ENCODE measurements at regions of chr9 and their contacts with region 1.

Region 1: DNA sequence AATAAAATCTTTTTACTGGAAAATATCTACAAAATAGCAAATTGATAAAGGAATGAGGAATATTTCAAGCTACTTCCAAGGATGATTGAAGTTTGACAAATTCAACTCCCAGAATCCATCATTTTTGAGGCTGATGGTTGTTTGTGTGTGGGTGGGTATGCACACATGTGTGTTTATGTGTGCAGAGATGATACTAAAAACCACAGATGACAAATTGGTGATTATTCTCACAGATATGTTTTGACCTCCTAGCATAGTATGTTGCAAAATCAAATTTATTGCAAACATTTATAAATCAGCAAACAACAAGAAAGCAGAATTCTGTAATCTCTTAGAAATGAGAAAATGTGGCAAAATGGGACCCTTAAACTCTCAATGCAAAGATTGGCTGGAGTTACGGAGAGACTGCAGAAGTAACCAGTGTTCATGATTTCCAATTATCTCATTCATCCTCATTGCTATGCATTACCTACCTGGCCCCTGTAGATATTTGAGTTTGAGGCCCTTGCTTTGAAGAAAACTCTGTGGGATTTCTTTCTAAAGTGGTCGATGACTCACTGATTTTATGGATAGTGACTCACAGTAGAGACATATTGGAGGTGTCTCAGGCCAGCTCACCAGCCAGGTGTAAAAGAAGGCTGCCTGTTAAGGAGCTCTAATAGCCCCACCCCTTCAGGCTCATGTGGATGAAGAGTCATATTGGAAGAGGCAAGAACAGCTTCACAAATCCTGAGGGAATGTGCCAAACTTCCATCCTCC is 44.6 kb upstream of the TMC1 start:
- DNase-seq: peak in 2 of 5 donors; percentile 1 to 60
- H3K4me3 ChIP-seq: no peak overlapping the region
- H3K4me3 Mint-ChIP-seq: peak overlapping the region in 1 of 8 donors; percentile 12
- H3K27ac ChIP-seq: no peak overlapping the region
- H3K27ac Mint-ChIP-seq: no peak overlapping the region
- H3K4me1 ChIP-seq: peaks cover 16% of the 10 kb centered on the region
- H3K4me1 Mint-ChIP-seq: peaks cover 12 to 35% (median 18%) of the 10 kb centered on the region in 4 donors
- H3K27me3 ChIP-seq: no peaks in the 10 kb centered on the region
- H3K27me3 Mint-ChIP-seq: no peaks in the 10 kb centered on the region

Region 2: GRCh38 chr9:72459308-72459707 is 17.5 kb before region 1 on chr9:
- CTCF ChIA-PET with region 1: no interaction called
- POLR2A ChIA-PET with region 1: no interaction called
- intact Hi-C with region 1: loop called (anchors 1 kb)
- DNase-seq: no peak
- H3K4me3 ChIP-seq: no peak overlapping the region
- H3K4me3 Mint-ChIP-seq: no peak overlapping the region
- H3K27ac ChIP-seq: no peak overlapping the region
- H3K27ac Mint-ChIP-seq: peak overlapping the region in 1 of 7 donors; percentile 55
- H3K4me1 ChIP-seq: peaks cover 17% of the 10 kb centered on the region
- H3K4me1 Mint-ChIP-seq: peaks cover 10 to 21% (median 18%) of the 10 kb centered on the region in 4 donors
- H3K27me3 ChIP-seq: no peaks in the 10 kb centered on the region
- H3K27me3 Mint-ChIP-seq: peaks cover 0 to 3% of the 10 kb centered on the region in 2 donors

Region 3: GRCh38 chr9:73380411-73380810 is 903.6 kb after region 1 on chr9:
- CTCF ChIA-PET with region 1: no interaction called
- POLR2A ChIA-PET with region 1: no interaction called
- intact Hi-C with region 1: no loop called
- DNase-seq: no peak
- H3K4me3 ChIP-seq: no peak overlapping the region
- H3K4me3 Mint-ChIP-seq: no peak overlapping the region
- H3K27ac ChIP-seq: no peak overlapping the region
- H3K27ac Mint-ChIP-seq: no peak overlapping the region
- H3K4me1 ChIP-seq: no peaks in the 10 kb centered on the region
- H3K4me1 Mint-ChIP-seq: no peaks in the 10 kb centered on the region
- H3K27me3 ChIP-seq: no peaks in the 10 kb centered on the region
- H3K27me3 Mint-ChIP-seq: no peaks in the 10 kb centered on the region